Transverse colon (tissue), 4 donors: ENCODE measurements at regions of chr19 and their contacts with region 1.

Region 1: DNA sequence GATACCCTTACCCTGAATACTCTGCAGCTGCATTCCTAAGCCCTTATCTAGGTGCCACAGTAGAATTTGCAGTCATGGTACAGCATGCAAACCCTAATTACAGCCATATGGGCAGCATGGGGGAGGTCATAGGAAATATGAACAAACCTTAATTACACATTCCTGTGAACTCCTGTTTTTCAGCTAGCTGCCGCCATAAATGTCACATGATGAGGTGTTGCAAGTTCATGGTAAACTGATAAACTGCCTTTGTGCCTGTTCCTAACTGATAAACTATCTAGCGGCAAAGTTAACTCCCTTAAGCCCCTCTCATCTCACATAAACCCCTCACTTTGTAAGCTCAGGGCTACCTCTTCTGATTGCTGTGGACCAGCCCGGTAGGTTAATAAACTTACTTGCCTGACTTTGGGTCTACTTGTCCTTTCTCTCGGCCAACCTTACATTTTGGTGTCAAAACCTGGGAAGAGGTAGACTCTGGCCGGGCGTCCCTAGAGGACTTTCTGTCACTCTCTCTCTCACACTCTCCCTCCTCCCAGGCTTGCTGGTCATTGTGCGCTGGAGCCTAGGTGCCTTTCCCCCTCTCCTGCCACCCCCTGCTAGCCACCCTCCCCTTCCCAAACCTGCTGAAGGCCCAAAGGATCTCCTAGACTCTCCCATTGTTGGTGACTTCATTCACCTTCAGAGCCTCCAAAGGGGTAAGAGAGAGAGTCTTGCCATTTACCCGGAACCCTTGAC is 43.3 kb downstream of the ZNF93 start:
- DNase-seq: no peak
- H3K4me3 ChIP-seq: no peak overlapping the region
- H3K27ac ChIP-seq: no peak overlapping the region
- H3K4me1 ChIP-seq: no peaks in the 10 kb centered on the region
- H3K27me3 ChIP-seq: no peaks in the 10 kb centered on the region
- CTCF ChIP-seq: no peak
- EP300 ChIP-seq: no peak
- POLR2A ChIP-seq: no peak

Region 2: GRCh38 chr19:19911150-19911549 is 32.9 kb before region 1 on chr19:
- in situ Hi-C with region 1: no loop called
- intact Hi-C with region 1: no loop called
- DNase-seq: no peak
- H3K4me3 ChIP-seq: no peak overlapping the region
- H3K27ac ChIP-seq: no peak overlapping the region
- H3K4me1 ChIP-seq: no peaks in the 10 kb centered on the region
- H3K27me3 ChIP-seq: no peaks in the 10 kb centered on the region
- CTCF ChIP-seq: no peak
- EP300 ChIP-seq: no peak
- POLR2A ChIP-seq: no peak

Region 3: GRCh38 chr19:21812450-21812849 is 1868.4 kb after region 1 on chr19:
- in situ Hi-C with region 1: no loop called
- intact Hi-C with region 1: loop called (anchors 10 kb)
- DNase-seq: no peak
- H3K4me3 ChIP-seq: no peak overlapping the region
- H3K27ac ChIP-seq: no peak overlapping the region
- H3K4me1 ChIP-seq: no peaks in the 10 kb centered on the region
- H3K27me3 ChIP-seq: no peaks in the 10 kb centered on the region
- CTCF ChIP-seq: no peak
- EP300 ChIP-seq: no peak
- POLR2A ChIP-seq: no peak